Esophagus muscularis mucosa (tissue), 4 donors: ENCODE measurements at regions of chr16 and their contacts with region 1.

Region 1: DNA sequence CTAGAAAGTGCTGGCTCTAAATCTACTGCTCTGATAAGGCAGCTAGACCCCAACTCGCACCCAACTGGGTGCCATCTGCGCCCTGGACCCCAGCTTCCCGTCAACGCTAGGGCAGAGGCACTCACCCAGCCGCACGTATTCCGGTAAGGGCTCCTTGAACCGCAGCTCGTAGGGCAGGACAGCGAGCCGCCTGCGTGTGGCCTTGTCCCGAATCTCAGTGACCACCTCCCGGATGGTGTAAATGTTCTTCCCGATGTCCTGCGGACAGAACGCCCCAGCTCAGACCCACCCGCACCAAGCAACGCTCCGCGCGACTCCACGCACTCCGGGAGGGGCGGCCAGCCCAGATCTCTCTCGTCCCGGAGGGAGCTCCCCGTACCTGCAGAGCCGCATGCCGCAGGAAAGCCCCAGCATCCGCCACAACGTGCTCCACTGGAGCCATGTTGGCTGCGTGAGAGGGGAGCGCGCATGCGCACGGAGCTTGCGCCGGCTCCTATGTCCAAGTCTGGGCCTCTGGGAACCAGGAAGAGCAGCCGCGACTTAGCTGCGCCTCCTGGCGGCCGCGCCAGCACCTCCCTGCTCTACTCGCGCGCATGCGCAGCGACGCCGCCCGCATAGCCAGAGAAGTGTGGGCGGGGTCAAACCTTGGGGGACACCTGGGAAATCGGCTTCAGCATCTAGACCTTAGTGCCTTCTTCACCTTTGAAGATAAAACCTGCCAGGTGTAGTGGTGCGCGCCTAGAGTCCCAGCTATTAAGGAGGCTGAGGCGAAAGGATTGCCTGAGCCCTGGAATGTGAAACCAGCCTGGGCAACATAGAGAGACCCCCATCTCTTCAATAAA is at the start of gene NOB1:
- DNase-seq: peak; percentile 98
- H3K4me3 ChIP-seq: peak within 1 kb of the TSS; percentile 81 to 90 (median 82)
- H3K27ac ChIP-seq: peak within 1 kb of the TSS; percentile 72 to 84 (median 75)
- H3K4me1 ChIP-seq: peaks cover 18 to 31% (median 22%) of the 10 kb centered on the region in 4 donors
- H3K27me3 ChIP-seq: no peaks in the 10 kb centered on the region
- CTCF ChIP-seq: peak in 2 of 3 experiments; percentile 99 to 100
- EP300 ChIP-seq: no peak
- POLR2A ChIP-seq: peak; percentile 31
- total RNA-seq, gene NOB1: 22.4 to 39.2 (median 30.3) TPM

Region 2: GRCh38 chr16:69553332-69553731 is 201.4 kb before region 1 on chr16:
- intact Hi-C with region 1: no loop called
- DNase-seq: peak; percentile 19
- H3K4me3 ChIP-seq: no peak overlapping the region
- H3K27ac ChIP-seq: no peak overlapping the region
- H3K4me1 ChIP-seq: no peaks in the 10 kb centered on the region
- H3K27me3 ChIP-seq: peaks cover 0 to 20% (median 0%) of the 10 kb centered on the region in 4 donors
- CTCF ChIP-seq: no peak
- EP300 ChIP-seq: no peak
- POLR2A ChIP-seq: no peak

Region 3: GRCh38 chr16:69709456-69710084 is 45.1 kb before region 1 on chr16:
- intact Hi-C with region 1: loop called (anchors 1 kb)
- DNase-seq: peak; percentile 57
- H3K4me3 ChIP-seq: no peak overlapping the region
- H3K27ac ChIP-seq: peak overlapping the region; percentile 16 to 50 (median 34)
- H3K4me1 ChIP-seq: peaks cover 6 to 52% (median 48%) of the 10 kb centered on the region in 4 donors
- H3K27me3 ChIP-seq: no peaks in the 10 kb centered on the region
- CTCF ChIP-seq: peak; percentile 68 to 80 (median 69)
- EP300 ChIP-seq: no peak
- POLR2A ChIP-seq: no peak